ENCODE measurements at regions of chr5 and their contacts with region 1.

Region 1: DNA sequence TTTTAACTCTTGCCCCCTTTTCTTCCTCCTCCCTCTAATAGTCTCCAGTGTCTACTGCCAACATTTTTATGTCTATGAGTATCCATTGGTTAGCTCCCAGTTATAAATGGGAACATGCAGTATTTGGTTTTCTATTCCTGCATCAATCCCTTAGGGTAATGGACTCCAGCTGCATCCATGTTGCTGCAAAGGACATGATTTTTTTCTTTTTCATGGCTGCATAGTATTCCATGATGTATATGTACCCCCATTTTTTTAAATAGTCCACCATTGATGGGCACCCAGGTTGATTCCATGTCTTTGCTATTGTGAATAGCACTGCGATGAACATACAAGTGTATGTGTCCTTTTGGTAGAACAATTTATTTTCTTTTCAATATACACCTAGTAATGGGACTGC is 993.7 kb downstream of the EFNA5 start:
- DNase-seq: no peak
- ATAC-seq: no peak
- H3K4me3 ChIP-seq: no peak overlapping the region
- H3K4me3 Mint-ChIP-seq: no peak overlapping the region
- H3K27ac ChIP-seq: no peak overlapping the region
- H3K27ac Mint-ChIP-seq: no peak overlapping the region
- H3K4me1 ChIP-seq: no peaks in the 10 kb centered on the region
- H3K4me1 Mint-ChIP-seq: no peaks in the 10 kb centered on the region
- H3K27me3 ChIP-seq: no peaks in the 10 kb centered on the region
- H3K27me3 Mint-ChIP-seq: no peaks in the 10 kb centered on the region

Region 2: DNA sequence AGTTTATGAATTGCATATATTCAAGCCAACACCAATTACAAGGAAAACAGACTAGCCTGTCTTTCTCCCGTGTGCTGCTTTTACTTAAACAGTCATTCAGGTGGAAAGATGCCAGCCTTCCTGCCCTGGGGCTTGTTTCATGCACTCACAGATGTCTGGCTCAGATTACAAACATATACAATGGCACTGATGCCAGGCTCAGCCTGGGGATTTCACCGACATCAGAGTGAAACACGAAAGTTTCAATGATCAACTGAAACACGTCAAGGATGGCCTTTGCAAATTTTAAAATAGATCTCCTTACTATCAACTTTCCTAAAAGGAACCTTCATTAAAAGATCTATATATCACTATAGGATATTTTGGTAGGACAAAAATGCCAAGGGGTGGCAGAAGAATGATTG is 582.9 kb before region 1 on chr5:
- CTCF ChIA-PET with region 1: no interaction called
- POLR2A ChIA-PET with region 1: interaction called in 1 of 2 experiments, 12 read pairs
- DNase-seq: no peak
- ATAC-seq: no peak
- H3K4me3 ChIP-seq: no peak overlapping the region
- H3K4me3 Mint-ChIP-seq: no peak overlapping the region
- H3K27ac ChIP-seq: no peak overlapping the region
- H3K27ac Mint-ChIP-seq: no peak overlapping the region
- H3K4me1 ChIP-seq: no peaks in the 10 kb centered on the region
- H3K4me1 Mint-ChIP-seq: no peaks in the 10 kb centered on the region
- H3K27me3 ChIP-seq: no peaks in the 10 kb centered on the region
- H3K27me3 Mint-ChIP-seq: no peaks in the 10 kb centered on the region